ENCODE measurements at regions of chr1 and their contacts with region 1.

Region 1: GRCh38 chr1:7070389-7071029 is 285.3 kb downstream of the CAMTA1 start:
- DNase-seq: peak; percentile 71
- H3K4me3 ChIP-seq: no peak overlapping the region
- H3K27ac ChIP-seq: no peak overlapping the region
- H3K4me1 ChIP-seq: no peaks in the 10 kb centered on the region
- H3K27me3 ChIP-seq: peaks cover 6% of the 10 kb centered on the region
- CTCF ChIP-seq: peak; percentile 92

Region 2: DNA sequence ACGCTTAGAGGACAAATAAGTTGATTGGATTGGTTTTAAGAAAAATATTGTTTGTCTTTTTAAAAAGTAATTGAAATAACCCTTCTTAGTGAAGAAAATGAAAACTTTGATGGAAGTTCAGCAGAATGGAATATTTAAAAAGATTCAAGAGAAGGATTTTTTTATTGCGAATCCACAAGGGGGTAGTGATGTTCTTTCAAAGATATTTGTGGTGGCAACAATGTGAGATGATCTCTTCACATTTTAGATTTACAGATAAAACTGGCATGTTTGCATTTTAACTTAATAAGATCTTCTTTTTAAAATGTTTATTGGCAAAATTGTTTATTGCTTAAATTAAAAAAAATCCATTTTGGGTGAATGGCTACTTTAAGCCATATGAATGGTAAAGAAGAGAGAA is 276.3 kb before region 1 on chr1:
- CTCF ChIA-PET with region 1: no interaction called
- POLR2A ChIA-PET with region 1: no interaction called
- intact Hi-C with region 1: loop called (anchors 5 kb)
- DNase-seq: peak; percentile 55
- H3K4me3 ChIP-seq: no peak overlapping the region
- H3K27ac ChIP-seq: no peak overlapping the region
- H3K4me1 ChIP-seq: peaks cover 6% of the 10 kb centered on the region
- H3K27me3 ChIP-seq: no peaks in the 10 kb centered on the region
- CTCF ChIP-seq: peak; percentile 55; the same call in 1 of the 2 replicates

Region 3: GRCh38 chr1:7186382-7187109 is 116.0 kb after region 1 on chr1:
- CTCF ChIA-PET with region 1: no interaction called
- POLR2A ChIA-PET with region 1: no interaction called
- intact Hi-C with region 1: no loop called
- DNase-seq: no peak
- H3K4me3 ChIP-seq: no peak overlapping the region
- H3K27ac ChIP-seq: no peak overlapping the region
- H3K4me1 ChIP-seq: no peaks in the 10 kb centered on the region
- H3K27me3 ChIP-seq: peaks cover 34% of the 10 kb centered on the region
- CTCF ChIP-seq: peak; percentile 30

Region 4: DNA sequence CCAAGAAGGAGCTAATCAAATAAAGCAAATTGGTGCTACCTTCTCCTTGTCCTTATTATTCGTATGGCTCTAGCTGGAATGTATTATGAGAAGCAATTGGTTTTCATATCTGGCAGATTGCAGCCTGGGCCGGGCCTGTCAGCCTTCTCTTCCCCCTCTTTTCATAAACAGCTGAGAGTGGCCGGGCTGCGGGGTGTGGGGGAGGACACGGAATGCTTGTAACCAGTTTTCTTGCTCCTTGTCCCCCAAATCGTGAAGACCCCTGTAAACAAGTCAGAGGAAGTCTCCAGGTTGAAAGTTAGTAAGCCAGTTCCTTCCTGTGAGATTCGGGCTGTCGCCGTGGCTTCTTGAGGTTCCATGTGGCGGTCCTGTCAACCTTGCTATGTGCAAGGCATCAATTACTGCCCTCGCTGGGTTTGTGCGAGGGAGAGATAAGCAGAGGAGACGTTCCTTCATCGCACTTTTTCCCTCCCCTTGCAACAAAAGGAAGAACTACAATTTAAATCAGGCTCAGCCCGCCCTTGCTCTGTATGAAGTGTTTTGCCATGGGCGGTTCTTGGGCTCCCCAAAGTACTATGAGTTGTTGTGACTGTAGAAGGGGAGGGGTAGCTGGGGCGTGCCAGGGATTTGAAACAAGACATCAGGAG is 165.5 kb after region 1 on chr1:
- CTCF ChIA-PET with region 1: interaction called, 10 read pairs
- POLR2A ChIA-PET with region 1: no interaction called
- intact Hi-C with region 1: no loop called
- DNase-seq: no peak
- H3K4me3 ChIP-seq: no peak overlapping the region
- H3K27ac ChIP-seq: no peak overlapping the region
- H3K4me1 ChIP-seq: no peaks in the 10 kb centered on the region
- H3K27me3 ChIP-seq: no peaks in the 10 kb centered on the region
- CTCF ChIP-seq: no peak

Measured in A673 (cell line).